Activated CD4-positive, alpha-beta memory T cell treated with anti-CD3 and anti-CD28 coated beads for 36 hours (primary cell): ENCODE measurements at regions of chr21 and their contacts with region 1.

Region 1: DNA sequence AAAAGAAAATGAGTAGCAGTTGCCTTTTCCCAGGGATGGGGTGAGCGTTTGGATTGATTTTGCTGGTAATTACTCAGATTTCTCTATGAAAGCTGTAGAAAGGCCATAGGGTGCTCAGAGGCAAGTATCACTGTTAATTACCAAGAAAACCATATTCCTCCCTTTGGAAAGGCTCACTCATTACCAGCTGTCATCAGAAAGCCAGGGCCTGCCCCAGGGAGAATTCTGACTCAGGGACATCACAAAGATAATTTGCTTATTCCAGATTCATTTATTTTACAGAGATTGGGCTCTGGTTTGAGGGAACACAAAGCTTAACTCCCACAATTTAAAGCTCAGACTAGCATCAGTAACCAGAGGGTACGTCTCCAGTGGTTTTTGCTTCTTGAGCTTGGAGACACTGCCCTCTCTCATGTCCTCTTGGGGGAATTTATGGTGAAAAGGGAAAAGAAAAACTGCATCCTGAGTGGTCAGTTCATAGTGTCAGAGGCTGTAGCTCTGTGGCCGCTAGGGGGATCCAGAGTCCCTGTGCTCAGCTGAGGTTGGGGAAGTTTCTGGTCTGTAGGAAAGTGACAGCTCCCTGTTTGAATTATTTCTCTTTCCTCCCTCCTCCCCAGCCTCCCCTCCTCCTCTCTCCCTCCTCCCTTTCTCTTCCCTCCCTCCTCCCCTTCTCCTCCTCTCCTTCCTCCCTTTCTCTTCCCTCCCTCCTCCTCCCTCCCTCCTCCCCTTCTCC is 204.3 kb downstream of the KCNJ6 start:
- DNase-seq: peak; percentile 59
- H3K4me3 Mint-ChIP-seq: no peak overlapping the region
- H3K27ac Mint-ChIP-seq: no peak overlapping the region
- H3K4me1 Mint-ChIP-seq: no peaks in the 10 kb centered on the region
- H3K27me3 Mint-ChIP-seq: peaks cover 16% of the 10 kb centered on the region

Region 2: DNA sequence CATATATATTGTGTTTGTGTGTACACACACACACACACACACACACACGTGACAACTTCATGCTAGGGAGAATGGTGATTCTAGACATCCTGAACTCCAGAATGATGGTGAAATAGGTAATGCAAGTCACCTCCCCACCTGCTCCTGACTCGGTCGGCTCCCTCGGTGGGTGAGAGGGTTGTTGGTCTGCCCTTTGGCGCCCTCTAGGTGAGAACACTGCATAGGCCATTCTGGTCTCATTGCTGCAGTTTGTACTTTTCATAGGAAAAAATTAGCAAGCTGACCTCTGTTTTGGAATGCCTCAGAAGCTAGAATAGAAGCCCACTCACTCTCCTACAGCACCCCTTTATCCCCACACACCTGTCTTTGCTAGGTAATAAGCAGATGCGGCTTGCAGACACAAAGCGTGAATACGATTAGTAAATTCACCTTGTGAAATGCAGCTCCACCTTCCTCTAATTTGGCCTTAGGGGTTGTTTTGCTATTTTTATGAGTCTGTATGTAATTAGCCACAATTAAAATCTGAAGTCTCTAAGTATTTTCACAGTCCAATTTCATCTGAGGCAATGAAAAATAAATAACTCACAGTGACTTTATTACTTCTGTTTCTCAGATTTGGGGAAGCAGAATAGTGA is 414.8 kb after region 1 on chr21:
- CTCF ChIA-PET with region 1: interaction called, 13 read pairs
- POLR2A ChIA-PET with region 1: no interaction called
- intact Hi-C with region 1: loop called (anchors 5 kb)
- DNase-seq: peak; percentile 66
- H3K4me3 Mint-ChIP-seq: no peak overlapping the region
- H3K27ac Mint-ChIP-seq: no peak overlapping the region
- H3K4me1 Mint-ChIP-seq: no peaks in the 10 kb centered on the region
- H3K27me3 Mint-ChIP-seq: peaks cover 2% of the 10 kb centered on the region